Astrocyte of the cerebellum (primary cell): ENCODE measurements at regions of chr14 and their contacts with region 1.

Region 1: GRCh38 chr14:67418401-67419174 is 6.6 kb upstream of the PLEK2 start:
- DNase-seq: no peak
- H3K4me3 ChIP-seq: no peak overlapping the region
- CTCF ChIP-seq: no peak

Region 2: GRCh38 chr14:67524634-67524963 is 106.0 kb after region 1 on chr14:
- in situ Hi-C with region 1: loop called (anchors 5 kb)
- DNase-seq: no peak
- H3K4me3 ChIP-seq: no peak overlapping the region
- CTCF ChIP-seq: no peak